Caco-2 (cell line): ENCODE measurements at regions of chrX and their contacts with region 1.

Region 1: GRCh38 chrX:48083212-48083611 is 11.8 kb upstream of the ZNF630 start:
- DNase-seq: peak; percentile 46
- H3K4me3 ChIP-seq: no peak overlapping the region
- H3K4me3 Mint-ChIP-seq: no peak overlapping the region
- H3K27ac Mint-ChIP-seq: no peak overlapping the region
- H3K4me1 ChIP-seq: no peaks in the 10 kb centered on the region
- H3K4me1 Mint-ChIP-seq: no peaks in the 10 kb centered on the region
- H3K27me3 ChIP-seq: no peaks in the 10 kb centered on the region
- H3K27me3 Mint-ChIP-seq: no peaks in the 10 kb centered on the region
- CTCF ChIP-seq: peak; percentile 30 to 39

Region 2: DNA sequence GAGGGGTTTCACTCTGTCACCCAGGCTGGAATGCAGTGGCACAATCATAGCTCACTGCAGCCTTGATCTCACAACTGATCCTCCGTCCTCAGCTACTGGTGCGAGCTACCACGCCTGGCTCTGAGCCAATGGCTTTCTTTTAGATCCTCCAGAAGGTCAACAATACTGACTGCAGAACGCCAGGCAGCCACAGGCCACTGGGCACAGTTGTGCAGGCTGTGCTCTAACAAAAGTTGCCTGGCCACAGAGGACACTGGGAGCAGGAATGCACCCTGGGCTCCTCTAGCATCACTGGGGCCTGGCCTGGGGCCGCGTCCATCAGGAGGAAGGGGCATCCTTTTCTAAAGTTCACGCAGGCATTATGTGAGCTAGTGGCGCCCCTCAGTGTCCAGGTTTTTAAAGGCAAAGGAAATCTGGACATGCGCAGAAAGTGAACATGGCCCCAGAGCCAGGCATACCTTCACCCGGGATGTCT is 410.7 kb after region 1 on chrX:
- CTCF ChIA-PET with region 1: no interaction called
- POLR2A ChIA-PET with region 1: no interaction called
- intact Hi-C with region 1: loop called (anchors 1 kb)
- DNase-seq: peak in 1 of 2 experiments; percentile 36
- H3K4me3 ChIP-seq: no peak overlapping the region
- H3K4me3 Mint-ChIP-seq: no peak overlapping the region
- H3K27ac Mint-ChIP-seq: no peak overlapping the region
- H3K4me1 ChIP-seq: no peaks in the 10 kb centered on the region
- H3K4me1 Mint-ChIP-seq: peaks cover 6% of the 10 kb centered on the region
- H3K27me3 ChIP-seq: no peaks in the 10 kb centered on the region
- H3K27me3 Mint-ChIP-seq: no peaks in the 10 kb centered on the region
- CTCF ChIP-seq: peak in 1 of 2 experiments; percentile 18

Region 3: DNA sequence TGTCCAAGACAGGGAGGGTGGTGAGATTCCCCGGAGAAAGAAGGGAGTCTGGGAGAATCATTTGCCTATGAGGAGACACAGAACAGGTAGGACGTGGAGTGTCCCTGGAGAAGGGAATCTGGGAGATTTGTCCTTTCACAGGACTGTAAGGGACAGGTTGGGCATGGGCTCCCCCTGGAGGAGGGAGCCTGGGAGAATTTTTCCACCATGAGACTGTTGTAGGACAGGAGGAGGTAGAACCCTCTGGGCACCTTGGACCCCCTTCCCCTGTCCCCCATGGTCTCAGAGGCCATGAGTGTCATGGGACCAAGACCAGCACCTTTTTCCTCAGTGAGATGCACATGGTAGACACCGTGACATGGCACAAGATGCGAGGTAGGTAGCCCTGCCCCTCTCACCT is 428.3 kb after region 1 on chrX:
- CTCF ChIA-PET with region 1: no interaction called
- POLR2A ChIA-PET with region 1: no interaction called
- intact Hi-C with region 1: loop called (anchors 1 kb)
- DNase-seq: peak; percentile 43 to 46
- H3K4me3 ChIP-seq: no peak overlapping the region
- H3K4me3 Mint-ChIP-seq: no peak overlapping the region
- H3K27ac Mint-ChIP-seq: peak overlapping the region; percentile 16
- H3K4me1 ChIP-seq: no peaks in the 10 kb centered on the region
- H3K4me1 Mint-ChIP-seq: no peaks in the 10 kb centered on the region
- H3K27me3 ChIP-seq: no peaks in the 10 kb centered on the region
- H3K27me3 Mint-ChIP-seq: no peaks in the 10 kb centered on the region
- CTCF ChIP-seq: peak; percentile 16 to 56